CD8-positive, alpha-beta memory T cell (primary cell): ENCODE measurements at regions of chr1 and their contacts with region 1.

Region 1: GRCh38 chr1:100459358-100460114 is 78.4 kb upstream of the GPR88 start:
- DNase-seq: peak; percentile 37 to 75 (median 54)
- H3K4me3 ChIP-seq: no peak overlapping the region
- H3K4me3 Mint-ChIP-seq: peak overlapping the region in 6 of 7 donors; percentile 2 to 49 (median 15)
- H3K27ac ChIP-seq: no peak overlapping the region
- H3K27ac Mint-ChIP-seq: peak overlapping the region; percentile 0 to 96 (median 83)
- H3K4me1 ChIP-seq: peaks cover 30% of the 10 kb centered on the region
- H3K4me1 Mint-ChIP-seq: peaks cover 52 to 84% (median 72%) of the 10 kb centered on the region in 3 donors
- H3K27me3 ChIP-seq: no peaks in the 10 kb centered on the region
- H3K27me3 Mint-ChIP-seq: peaks cover 0 to 2% of the 10 kb centered on the region in 2 donors

Region 2: DNA sequence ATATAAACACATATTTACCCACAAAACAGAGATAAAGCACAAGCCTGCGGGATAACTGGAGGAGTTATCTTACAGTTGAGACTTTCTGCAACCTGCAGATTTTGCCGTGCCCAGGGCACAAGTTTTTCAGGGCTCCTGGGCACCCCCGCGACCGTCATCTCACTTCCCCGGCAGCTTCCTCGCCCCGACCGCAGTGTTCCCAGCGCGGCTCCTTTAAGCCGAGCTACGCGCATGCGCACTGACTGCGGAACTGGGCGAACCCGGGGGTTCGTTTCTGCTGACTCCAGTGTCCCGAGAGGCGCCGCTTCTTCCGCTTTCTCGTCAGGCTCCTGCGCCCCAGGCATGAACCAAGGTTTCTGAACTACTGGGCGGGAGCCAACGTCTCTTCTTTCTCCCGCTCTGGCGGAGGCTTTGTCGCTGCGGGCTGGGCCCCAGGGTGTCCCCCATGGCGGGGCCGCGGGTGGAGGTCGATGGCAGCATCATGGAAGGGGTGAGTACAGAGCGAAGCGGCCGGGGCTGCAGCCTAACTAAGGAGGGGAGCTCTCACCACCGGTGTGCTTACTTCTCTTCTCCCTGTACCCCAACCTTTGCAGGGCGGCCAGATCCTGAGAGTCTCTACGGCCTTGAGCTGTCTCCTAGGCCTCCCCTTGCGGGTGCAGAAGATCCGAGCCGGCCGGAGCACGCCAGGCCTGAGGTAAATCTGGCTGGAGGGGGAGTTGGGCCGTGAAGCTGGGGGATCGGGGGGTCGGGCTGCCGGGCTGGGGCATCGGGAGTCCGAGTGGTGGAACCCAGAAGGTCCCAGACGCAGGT is 193.4 kb before region 1 on chr1 and contains the start of gene RTCA:
- CTCF ChIA-PET with region 1: interaction called, 11 read pairs
- POLR2A ChIA-PET with region 1: no interaction called
- DNase-seq: peak; percentile 93 to 98 (median 95)
- H3K4me3 ChIP-seq: peak within 1 kb of the TSS; percentile 97
- H3K4me3 Mint-ChIP-seq: peak within 1 kb of the TSS; percentile 94 to 100 (median 100)
- H3K27ac ChIP-seq: peak within 1 kb of the TSS; percentile 93
- H3K27ac Mint-ChIP-seq: peak within 1 kb of the TSS; percentile 80 to 98 (median 98)
- H3K4me1 ChIP-seq: peaks cover 36% of the 10 kb centered on the region
- H3K4me1 Mint-ChIP-seq: peaks cover 45 to 60% (median 54%) of the 10 kb centered on the region in 3 donors
- H3K27me3 ChIP-seq: no peaks in the 10 kb centered on the region
- H3K27me3 Mint-ChIP-seq: peaks cover 0 to 4% of the 10 kb centered on the region in 2 donors
- total RNA-seq, gene RTCA: 64.5 to 68.3 TPM

Region 3: DNA sequence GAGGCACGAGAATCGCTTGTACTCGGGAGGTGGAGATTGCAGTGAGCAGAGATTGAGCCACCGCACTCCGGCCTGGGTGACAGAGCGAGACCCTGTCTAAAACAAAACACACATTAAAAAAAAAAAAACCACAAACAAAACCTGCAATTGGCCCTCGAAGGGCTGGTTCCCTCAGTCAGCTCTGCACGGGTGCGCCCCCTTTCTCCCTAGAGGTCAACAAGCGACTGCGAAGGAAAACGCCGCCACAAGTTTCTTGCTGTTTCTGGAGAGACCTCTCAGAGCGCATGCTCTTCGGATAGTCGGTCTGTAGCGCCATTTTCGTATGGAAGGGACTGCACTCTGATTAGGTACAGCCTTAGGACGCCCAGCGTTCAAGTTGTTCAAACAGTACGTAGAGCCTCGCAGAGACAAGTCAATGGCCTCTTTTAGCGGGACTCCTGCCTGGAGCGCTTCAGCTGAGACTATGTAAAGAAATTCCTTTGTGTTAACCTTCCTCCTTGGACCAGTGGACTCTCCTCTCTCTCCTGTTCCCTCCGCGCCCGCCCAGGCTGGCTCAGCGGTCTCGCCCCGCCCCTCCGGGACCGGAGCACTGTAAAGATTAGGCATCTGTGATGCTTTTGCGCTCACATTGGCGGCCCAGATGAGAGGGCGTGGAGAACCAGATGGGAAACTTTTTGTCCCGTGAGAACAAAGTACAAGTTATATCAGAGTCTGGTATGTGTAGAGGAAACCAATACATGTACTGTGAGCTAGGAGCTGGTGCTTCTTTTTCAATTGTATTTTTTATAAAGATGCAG is 108.2 kb before region 1 on chr1:
- CTCF ChIA-PET with region 1: interaction called, 41 read pairs
- POLR2A ChIA-PET with region 1: interaction called, 7 read pairs
- DNase-seq: peak; percentile 82 to 92 (median 87)
- H3K4me3 ChIP-seq: peak overlapping the region; percentile 94
- H3K4me3 Mint-ChIP-seq: peak overlapping the region; percentile 94 to 100 (median 97)
- H3K27ac ChIP-seq: peak overlapping the region; percentile 92
- H3K27ac Mint-ChIP-seq: peak overlapping the region; percentile 97 to 100 (median 100)
- H3K4me1 ChIP-seq: peaks cover 23% of the 10 kb centered on the region
- H3K4me1 Mint-ChIP-seq: peaks cover 27 to 36% (median 31%) of the 10 kb centered on the region in 3 donors
- H3K27me3 ChIP-seq: no peaks in the 10 kb centered on the region
- H3K27me3 Mint-ChIP-seq: peaks cover 0 to 10% of the 10 kb centered on the region in 2 donors

Region 4: GRCh38 chr1:100400404-100400803 is 59.1 kb before region 1 on chr1:
- CTCF ChIA-PET with region 1: interaction called, 11 read pairs
- POLR2A ChIA-PET with region 1: no interaction called
- DNase-seq: peak; percentile 39 to 82 (median 78)
- H3K4me3 ChIP-seq: peak overlapping the region; percentile 21
- H3K4me3 Mint-ChIP-seq: peak overlapping the region; percentile 67 to 86 (median 77)
- H3K27ac ChIP-seq: peak overlapping the region; percentile 13
- H3K27ac Mint-ChIP-seq: peak overlapping the region; percentile 77 to 98 (median 87)
- H3K4me1 ChIP-seq: peaks cover 98% of the 10 kb centered on the region
- H3K4me1 Mint-ChIP-seq: peaks cover 85 to 94% (median 94%) of the 10 kb centered on the region in 3 donors
- H3K27me3 ChIP-seq: no peaks in the 10 kb centered on the region
- H3K27me3 Mint-ChIP-seq: no peaks in the 10 kb centered on the region

Region 5: GRCh38 chr1:100414693-100415497 is 44.6 kb before region 1 on chr1:
- CTCF ChIA-PET with region 1: interaction called, 10 read pairs
- POLR2A ChIA-PET with region 1: interaction called, 3 read pairs
- DNase-seq: peak in 1 of 5 donors; percentile 59
- H3K4me3 ChIP-seq: peak overlapping the region; percentile 5
- H3K4me3 Mint-ChIP-seq: peak overlapping the region; percentile 13 to 63 (median 51)
- H3K27ac ChIP-seq: peak overlapping the region; percentile 25
- H3K27ac Mint-ChIP-seq: peak overlapping the region; percentile 41 to 92 (median 87)
- H3K4me1 ChIP-seq: peaks cover 78% of the 10 kb centered on the region
- H3K4me1 Mint-ChIP-seq: peaks cover 79 to 91% (median 88%) of the 10 kb centered on the region in 3 donors
- H3K27me3 ChIP-seq: no peaks in the 10 kb centered on the region
- H3K27me3 Mint-ChIP-seq: no peaks in the 10 kb centered on the region

Region 6: GRCh38 chr1:100423832-100424337 is 35.7 kb before region 1 on chr1:
- CTCF ChIA-PET with region 1: interaction called, 38 read pairs
- POLR2A ChIA-PET with region 1: interaction called, 6 read pairs
- DNase-seq: peak in 1 of 5 donors; percentile 64
- H3K4me3 ChIP-seq: peak overlapping the region; percentile 35
- H3K4me3 Mint-ChIP-seq: peak overlapping the region; percentile 84 to 95 (median 91)
- H3K27ac ChIP-seq: peak overlapping the region; percentile 66
- H3K27ac Mint-ChIP-seq: peak overlapping the region; percentile 83 to 99 (median 96)
- H3K4me1 ChIP-seq: peaks cover 42% of the 10 kb centered on the region
- H3K4me1 Mint-ChIP-seq: peaks cover 71 to 92% (median 89%) of the 10 kb centered on the region in 3 donors
- H3K27me3 ChIP-seq: no peaks in the 10 kb centered on the region
- H3K27me3 Mint-ChIP-seq: no peaks in the 10 kb centered on the region

Region 7: GRCh38 chr1:100485855-100486258 is 26.3 kb after region 1 on chr1:
- CTCF ChIA-PET with region 1: no interaction called
- POLR2A ChIA-PET with region 1: no interaction called
- DNase-seq: no peak
- H3K4me3 ChIP-seq: no peak overlapping the region
- H3K4me3 Mint-ChIP-seq: no peak overlapping the region
- H3K27ac ChIP-seq: no peak overlapping the region
- H3K27ac Mint-ChIP-seq: peak overlapping the region in 5 of 8 donors; percentile 45 to 68 (median 60)
- H3K4me1 ChIP-seq: no peaks in the 10 kb centered on the region
- H3K4me1 Mint-ChIP-seq: peaks cover 10 to 37% (median 13%) of the 10 kb centered on the region in 3 donors
- H3K27me3 ChIP-seq: no peaks in the 10 kb centered on the region
- H3K27me3 Mint-ChIP-seq: no peaks in the 10 kb centered on the region

Region 8: DNA sequence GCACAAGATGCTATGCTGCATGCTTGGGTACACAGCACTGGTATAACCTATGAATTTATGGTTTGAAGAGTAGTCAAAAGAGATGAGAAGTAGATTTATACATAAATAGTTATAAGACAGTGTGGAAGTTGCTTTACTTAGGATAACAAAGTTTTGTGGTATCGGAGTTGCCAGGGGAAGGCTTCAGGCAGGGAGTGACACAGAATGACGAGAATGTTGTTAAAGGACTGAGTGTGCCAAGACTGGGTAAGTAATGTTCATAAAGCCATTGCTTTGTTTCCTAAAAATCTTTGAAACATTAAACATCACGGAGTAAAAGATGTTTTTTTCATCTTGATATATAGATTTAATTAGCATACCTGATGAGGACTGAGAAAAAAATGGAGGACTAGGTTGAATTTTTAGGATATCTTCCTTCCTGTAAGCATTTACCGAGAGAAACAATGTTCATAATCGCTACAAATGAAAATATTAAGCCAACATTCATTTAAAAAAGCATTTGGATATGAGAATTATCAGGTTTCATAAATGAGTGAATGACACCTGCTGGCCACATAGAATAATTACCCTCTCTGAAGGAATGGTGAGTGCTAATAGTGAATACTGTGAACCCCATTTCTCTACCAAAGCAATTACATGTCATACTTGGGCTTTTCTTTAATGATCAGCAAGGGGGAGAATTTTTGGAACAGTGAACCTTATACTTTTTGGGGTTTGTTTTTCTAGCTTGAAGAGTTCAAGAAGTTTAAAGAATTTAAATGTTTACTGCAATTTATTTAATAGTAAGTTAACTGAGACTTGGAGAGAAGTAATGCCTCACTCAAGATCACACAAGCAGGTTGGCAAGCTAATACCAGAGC is 406.7 kb after region 1 on chr1:
- CTCF ChIA-PET with region 1: interaction called, 13 read pairs
- POLR2A ChIA-PET with region 1: interaction called, 4 read pairs
- DNase-seq: peak in 1 of 5 donors; percentile 2
- H3K4me3 ChIP-seq: no peak overlapping the region
- H3K4me3 Mint-ChIP-seq: no peak overlapping the region
- H3K27ac ChIP-seq: no peak overlapping the region
- H3K27ac Mint-ChIP-seq: no peak overlapping the region
- H3K4me1 ChIP-seq: no peaks in the 10 kb centered on the region
- H3K4me1 Mint-ChIP-seq: no peaks in the 10 kb centered on the region
- H3K27me3 ChIP-seq: no peaks in the 10 kb centered on the region
- H3K27me3 Mint-ChIP-seq: peaks cover 0 to 1% of the 10 kb centered on the region in 2 donors